ENCODE measurements at regions of chr1 and their contacts with region 1.

Region 1: GRCh38 chr1:147515046-147515869 is 26.0 kb upstream of the BCL9 start:
- DNase-seq: peak in 6 of 9 donors; percentile 11 to 37 (median 24)
- ATAC-seq: peak; percentile 42
- H3K4me3 ChIP-seq: no peak overlapping the region
- H3K4me3 Mint-ChIP-seq: no peak overlapping the region
- H3K27ac ChIP-seq: no peak overlapping the region
- H3K27ac Mint-ChIP-seq: peak overlapping the region in 1 of 9 donors; percentile 6
- H3K4me1 ChIP-seq: no peaks in the 10 kb centered on the region
- H3K4me1 Mint-ChIP-seq: peaks cover 0 to 15% (median 6%) of the 10 kb centered on the region in 7 donors
- H3K27me3 ChIP-seq: no peaks in the 10 kb centered on the region
- H3K27me3 Mint-ChIP-seq: peaks cover 0 to 19% (median 3%) of the 10 kb centered on the region in 5 donors

Region 2: GRCh38 chr1:146049436-146049835 is 1465.8 kb before region 1 on chr1:
- CTCF ChIA-PET with region 1: no interaction called
- POLR2A ChIA-PET with region 1: no interaction called
- intact Hi-C with region 1: no loop called
- DNase-seq: no peak
- ATAC-seq: no peak
- H3K4me3 ChIP-seq: no peak overlapping the region
- H3K4me3 Mint-ChIP-seq: no peak overlapping the region
- H3K27ac ChIP-seq: no peak overlapping the region
- H3K27ac Mint-ChIP-seq: peak overlapping the region in 2 of 9 donors; percentile 24 to 31
- H3K4me1 ChIP-seq: no peaks in the 10 kb centered on the region
- H3K4me1 Mint-ChIP-seq: peaks cover 6 to 43% (median 37%) of the 10 kb centered on the region in 7 donors
- H3K27me3 ChIP-seq: no peaks in the 10 kb centered on the region
- H3K27me3 Mint-ChIP-seq: no peaks in the 10 kb centered on the region

Region 3: GRCh38 chr1:147618077-147618569 is 102.9 kb after region 1 on chr1:
- CTCF ChIA-PET with region 1: no interaction called
- POLR2A ChIA-PET with region 1: no interaction called
- intact Hi-C with region 1: loop called in 1 of 2 experiments (anchors 1 kb)
- DNase-seq: peak in 2 of 9 donors; percentile 3 to 48
- ATAC-seq: peak; percentile 69
- H3K4me3 ChIP-seq: no peak overlapping the region
- H3K4me3 Mint-ChIP-seq: peak overlapping the region in 1 of 10 donors; percentile 36
- H3K27ac ChIP-seq: no peak overlapping the region
- H3K27ac Mint-ChIP-seq: peak overlapping the region; percentile 10 to 83 (median 65)
- H3K4me1 ChIP-seq: peaks cover 0 to 8% of the 10 kb centered on the region in 2 donors
- H3K4me1 Mint-ChIP-seq: peaks cover 2 to 35% (median 20%) of the 10 kb centered on the region in 7 donors
- H3K27me3 ChIP-seq: no peaks in the 10 kb centered on the region
- H3K27me3 Mint-ChIP-seq: no peaks in the 10 kb centered on the region

Region 4: DNA sequence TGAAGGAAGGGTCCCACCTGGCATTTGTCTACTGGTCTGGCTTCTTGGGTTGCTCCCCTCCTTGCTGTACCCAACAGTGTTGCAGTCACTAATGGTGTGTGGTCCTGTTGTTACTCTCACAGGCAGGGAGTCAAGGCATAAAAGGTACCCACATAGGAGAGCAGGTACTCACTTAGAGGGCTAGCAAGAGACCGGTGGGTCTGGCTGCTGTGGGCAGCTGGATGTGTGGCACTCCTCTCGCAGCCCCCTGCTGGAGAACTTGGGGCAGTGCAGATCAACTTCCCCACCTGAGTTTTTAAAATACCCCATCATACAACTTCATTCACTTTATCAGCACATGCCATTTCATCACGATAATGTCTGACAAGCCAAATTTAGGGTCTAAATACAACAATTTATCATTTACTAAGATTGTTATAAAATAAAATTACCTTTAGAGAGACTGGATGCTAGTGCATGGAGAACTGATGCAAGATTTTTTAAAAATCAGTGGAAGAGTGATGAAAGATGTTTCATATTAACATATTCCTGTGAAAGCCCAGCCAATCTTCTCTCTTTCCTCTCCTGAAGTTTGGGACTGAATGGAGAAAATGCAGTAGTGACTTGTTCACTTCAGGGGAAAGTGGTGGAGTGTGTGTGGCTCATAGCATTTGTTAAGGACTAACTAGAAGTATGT is 112.3 kb after region 1 on chr1:
- CTCF ChIA-PET with region 1: interaction called, 55 read pairs
- POLR2A ChIA-PET with region 1: interaction called, 3 read pairs
- intact Hi-C with region 1: loop called in 1 of 2 experiments (anchors 1 kb)
- DNase-seq: peak; percentile 24 to 63 (median 44)
- ATAC-seq: peak; percentile 79
- H3K4me3 ChIP-seq: no peak overlapping the region
- H3K4me3 Mint-ChIP-seq: peak overlapping the region in 1 of 10 donors; percentile 20
- H3K27ac ChIP-seq: no peak overlapping the region
- H3K27ac Mint-ChIP-seq: no peak overlapping the region
- H3K4me1 ChIP-seq: peaks cover 0 to 34% of the 10 kb centered on the region in 2 donors
- H3K4me1 Mint-ChIP-seq: peaks cover 23 to 42% (median 35%) of the 10 kb centered on the region in 7 donors
- H3K27me3 ChIP-seq: no peaks in the 10 kb centered on the region
- H3K27me3 Mint-ChIP-seq: no peaks in the 10 kb centered on the region

Region 5: DNA sequence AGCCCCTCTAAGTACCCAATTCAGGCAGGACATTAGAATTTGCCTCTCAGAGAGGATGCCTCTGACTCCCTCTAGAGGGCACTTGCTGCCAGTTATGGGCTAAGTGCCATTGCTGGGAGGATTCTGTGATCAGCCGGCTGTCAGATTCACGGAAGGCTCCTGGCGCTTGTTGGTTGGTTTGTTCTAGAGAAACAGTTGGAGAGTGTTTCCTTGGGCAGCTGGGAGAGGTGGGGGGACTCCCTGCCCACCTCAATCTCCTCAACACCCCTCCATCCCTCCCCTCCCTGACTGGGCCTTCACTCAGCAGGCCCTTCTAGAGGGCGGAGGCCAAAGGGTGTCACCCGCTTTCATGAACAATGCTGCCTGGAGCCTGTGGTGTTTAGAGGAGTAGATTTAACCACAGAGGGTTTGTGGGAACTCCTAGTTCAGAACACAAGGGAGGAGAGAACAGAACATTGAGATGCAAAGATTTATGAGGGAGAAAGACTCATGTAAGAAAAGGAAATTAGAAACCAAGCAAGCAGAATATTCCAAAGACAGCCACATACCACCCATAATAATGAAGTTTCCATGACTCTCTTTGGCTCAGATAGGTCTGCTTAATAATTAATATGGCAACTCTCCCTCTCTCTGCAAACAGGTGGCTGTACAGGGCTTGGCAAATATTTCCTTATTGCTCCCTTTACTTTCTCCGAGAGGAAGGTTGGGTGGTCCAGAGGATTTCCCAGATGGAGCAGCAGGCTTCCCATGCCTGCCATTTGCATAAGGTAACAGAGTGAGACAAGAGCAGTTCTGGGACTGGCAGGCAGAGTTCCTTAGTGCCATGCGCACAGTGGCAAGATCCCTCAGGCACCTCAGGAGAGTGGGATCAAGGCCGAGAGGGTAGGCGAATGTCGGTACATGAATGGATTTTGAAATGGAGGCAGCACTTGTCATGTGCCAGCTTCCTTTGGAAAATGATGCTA is 185.1 kb after region 1 on chr1:
- CTCF ChIA-PET with region 1: interaction called, 4 read pairs
- POLR2A ChIA-PET with region 1: no interaction called
- intact Hi-C with region 1: loop called in 1 of 2 experiments (anchors 1 kb)
- DNase-seq: peak; percentile 16 to 66 (median 58)
- ATAC-seq: peak; percentile 91
- H3K4me3 ChIP-seq: no peak overlapping the region
- H3K4me3 Mint-ChIP-seq: peak overlapping the region in 9 of 10 donors; percentile 18 to 77 (median 62)
- H3K27ac ChIP-seq: peak overlapping the region; percentile 29
- H3K27ac Mint-ChIP-seq: peak overlapping the region in 7 of 9 donors; percentile 15 to 78 (median 60)
- H3K4me1 ChIP-seq: peaks cover 0 to 7% of the 10 kb centered on the region in 2 donors
- H3K4me1 Mint-ChIP-seq: peaks cover 6 to 17% (median 15%) of the 10 kb centered on the region in 7 donors
- H3K27me3 ChIP-seq: no peaks in the 10 kb centered on the region
- H3K27me3 Mint-ChIP-seq: peaks cover 4 to 31% (median 11%) of the 10 kb centered on the region in 5 donors

Measured in naive thymus-derived CD4-positive, alpha-beta T cell (primary cell).